ENCODE measurements at regions of chr17 and their contacts with region 1.

Region 1: DNA sequence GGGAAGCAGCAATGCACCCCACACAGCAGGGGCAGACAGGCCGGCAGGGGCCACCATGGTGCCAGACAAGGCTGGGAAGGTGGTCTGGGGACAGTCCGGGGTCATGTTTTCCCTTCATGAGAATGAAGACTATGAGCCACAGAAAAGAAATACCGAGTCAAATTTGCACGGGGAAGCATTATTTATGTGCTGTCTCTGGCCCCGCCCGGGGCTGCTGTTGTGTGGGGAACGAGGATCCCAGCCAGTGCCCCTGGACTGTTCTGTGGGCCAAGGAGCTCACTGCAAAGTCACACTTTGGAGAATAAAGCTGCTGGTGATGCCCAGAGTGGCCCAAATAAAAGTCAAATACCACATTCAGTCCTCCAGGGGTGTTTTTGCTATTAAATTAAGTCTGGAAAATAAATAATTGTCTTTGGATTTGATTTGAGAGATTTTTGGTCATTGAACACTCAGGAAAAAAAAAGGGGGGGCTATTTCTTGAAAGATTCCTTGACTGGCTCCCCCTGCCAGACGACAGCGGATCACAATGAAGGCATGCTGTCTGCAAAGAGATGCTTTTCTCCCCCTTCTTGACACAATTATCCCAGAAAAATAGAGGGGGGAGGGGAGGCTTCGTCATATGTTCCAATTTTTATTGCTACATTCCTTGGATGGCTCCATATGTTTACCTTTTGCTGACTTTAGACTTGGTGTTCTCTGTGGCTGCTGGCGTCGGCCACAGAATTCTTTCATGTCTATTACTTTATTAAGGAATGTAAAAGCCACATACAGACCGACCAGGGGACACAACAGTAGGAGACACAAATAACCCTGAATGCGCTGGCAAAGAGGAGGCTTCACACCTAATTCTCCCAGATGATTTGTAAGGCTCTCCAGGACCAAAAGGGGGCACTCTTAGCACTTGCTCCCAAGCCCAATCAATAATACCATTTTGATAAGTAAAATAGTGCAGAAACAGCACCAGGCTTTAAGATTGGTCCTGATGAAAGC is 27.1 kb upstream of the ANKFN1 start:
- DNase-seq: peak in 1 of 2 experiments; percentile 53
- H3K4me3 ChIP-seq: no peak overlapping the region
- H3K27ac ChIP-seq: no peak overlapping the region
- H3K4me1 ChIP-seq: peaks cover 0 to 3% (median under 1%) of the 10 kb centered on the region in 4 experiments; a peak in 1 of 7 replicates
- H3K27me3 ChIP-seq: no peaks in the 10 kb centered on the region
- CTCF ChIP-seq: peak; percentile 10 to 75 (median 73)
- EP300 ChIP-seq: no peak
- POLR2A ChIP-seq: no peak
- RAD21 ChIP-seq: peak; percentile 88 to 91

Region 2: GRCh38 chr17:56108811-56109284 is 17.3 kb before region 1 on chr17:
- CTCF ChIA-PET with region 1: interaction called, 23 read pairs
- POLR2A ChIA-PET with region 1: no interaction called
- DNase-seq: no peak
- H3K4me3 ChIP-seq: no peak overlapping the region
- H3K27ac ChIP-seq: no peak overlapping the region
- H3K4me1 ChIP-seq: no peaks in the 10 kb centered on the region
- H3K27me3 ChIP-seq: no peaks in the 10 kb centered on the region
- CTCF ChIP-seq: no peak
- EP300 ChIP-seq: no peak
- POLR2A ChIP-seq: no peak
- RAD21 ChIP-seq: no peak

Region 3: GRCh38 chr17:56142325-56142724 is 16.2 kb after region 1 on chr17:
- CTCF ChIA-PET with region 1: interaction called, 15 read pairs
- POLR2A ChIA-PET with region 1: no interaction called
- DNase-seq: no peak
- H3K4me3 ChIP-seq: no peak overlapping the region
- H3K27ac ChIP-seq: no peak overlapping the region
- H3K4me1 ChIP-seq: no peaks in the 10 kb centered on the region
- H3K27me3 ChIP-seq: no peaks in the 10 kb centered on the region
- CTCF ChIP-seq: no peak
- EP300 ChIP-seq: no peak
- POLR2A ChIP-seq: no peak
- RAD21 ChIP-seq: no peak

Region 4: GRCh38 chr17:56222255-56222654 is 96.1 kb after region 1 on chr17:
- CTCF ChIA-PET with region 1: no interaction called
- POLR2A ChIA-PET with region 1: no interaction called
- DNase-seq: no peak
- H3K4me3 ChIP-seq: no peak overlapping the region
- H3K27ac ChIP-seq: 0 out of 2 replicates have a peak overlapping the region, but pooled peaks have one; percentile 26
- H3K4me1 ChIP-seq: peaks cover 0 to 5% (median under 1%) of the 10 kb centered on the region in 4 experiments; a peak in 2 of 7 replicates
- H3K27me3 ChIP-seq: no peaks in the 10 kb centered on the region
- CTCF ChIP-seq: no peak
- EP300 ChIP-seq: no peak
- POLR2A ChIP-seq: no peak
- RAD21 ChIP-seq: no peak

Region 5: DNA sequence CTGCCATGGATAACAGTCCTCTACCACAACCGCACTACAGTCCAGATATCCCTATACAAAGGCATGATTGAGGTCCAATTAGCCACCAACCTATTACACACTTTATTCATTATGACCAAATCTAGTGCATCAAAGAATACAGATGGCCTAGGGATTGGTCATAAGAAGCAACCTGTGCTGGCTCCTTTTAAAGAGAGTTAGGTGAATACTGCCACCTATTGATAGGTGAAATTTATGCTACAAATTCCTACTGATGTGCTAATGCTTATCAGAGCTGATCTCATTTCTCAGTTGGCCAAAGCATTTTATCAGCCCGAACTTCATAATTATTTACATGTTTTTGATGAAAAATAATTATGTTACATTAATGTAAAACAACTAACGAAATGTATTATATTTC is 193.4 kb after region 1 on chr17:
- CTCF ChIA-PET with region 1: interaction called, 44 read pairs
- POLR2A ChIA-PET with region 1: no interaction called
- DNase-seq: no peak
- H3K4me3 ChIP-seq: no peak overlapping the region
- H3K27ac ChIP-seq: no peak overlapping the region
- H3K4me1 ChIP-seq: peaks cover 0 to 6% (median 2%) of the 10 kb centered on the region in 4 experiments; a peak in 3 of 7 replicates
- H3K27me3 ChIP-seq: peaks cover 0 to 1% (median 0%) of the 10 kb centered on the region in 4 experiments; a peak in 1 of 7 replicates
- CTCF ChIP-seq: peak in 2 of 3 experiments; percentile 42 to 59; a peak in 2 of 4 replicates
- EP300 ChIP-seq: no peak
- POLR2A ChIP-seq: no peak
- RAD21 ChIP-seq: peak; percentile 79